B cell (primary cell): ENCODE measurements at regions of chr20 and their contacts with region 1.

Region 1: GRCh38 chr20:18287915-18288748 is at the start of gene ZNF133:
- DNase-seq: peak; percentile 98
- ATAC-seq: peak; percentile 94
- H3K4me3 ChIP-seq: peak within 1 kb of the TSS; percentile 88 to 99 (median 96)
- H3K4me3 Mint-ChIP-seq: peak within 1 kb of the TSS; percentile 90
- H3K27ac ChIP-seq: peak within 1 kb of the TSS; percentile 89 to 97
- H3K27ac Mint-ChIP-seq: peak within 1 kb of the TSS; percentile 96
- H3K4me1 ChIP-seq: peaks cover 12 to 15% of the 10 kb centered on the region in 2 donors
- H3K4me1 Mint-ChIP-seq: peaks cover 23% of the 10 kb centered on the region
- H3K27me3 ChIP-seq: peaks cover 0 to 19% (median 7%) of the 10 kb centered on the region in 4 experiments
- H3K27me3 Mint-ChIP-seq: peaks cover 28% of the 10 kb centered on the region
- CTCF ChIP-seq: no peak
- total RNA-seq, gene ZNF133: 13.6 and 14.9 TPM in 2 replicates

Region 2: DNA sequence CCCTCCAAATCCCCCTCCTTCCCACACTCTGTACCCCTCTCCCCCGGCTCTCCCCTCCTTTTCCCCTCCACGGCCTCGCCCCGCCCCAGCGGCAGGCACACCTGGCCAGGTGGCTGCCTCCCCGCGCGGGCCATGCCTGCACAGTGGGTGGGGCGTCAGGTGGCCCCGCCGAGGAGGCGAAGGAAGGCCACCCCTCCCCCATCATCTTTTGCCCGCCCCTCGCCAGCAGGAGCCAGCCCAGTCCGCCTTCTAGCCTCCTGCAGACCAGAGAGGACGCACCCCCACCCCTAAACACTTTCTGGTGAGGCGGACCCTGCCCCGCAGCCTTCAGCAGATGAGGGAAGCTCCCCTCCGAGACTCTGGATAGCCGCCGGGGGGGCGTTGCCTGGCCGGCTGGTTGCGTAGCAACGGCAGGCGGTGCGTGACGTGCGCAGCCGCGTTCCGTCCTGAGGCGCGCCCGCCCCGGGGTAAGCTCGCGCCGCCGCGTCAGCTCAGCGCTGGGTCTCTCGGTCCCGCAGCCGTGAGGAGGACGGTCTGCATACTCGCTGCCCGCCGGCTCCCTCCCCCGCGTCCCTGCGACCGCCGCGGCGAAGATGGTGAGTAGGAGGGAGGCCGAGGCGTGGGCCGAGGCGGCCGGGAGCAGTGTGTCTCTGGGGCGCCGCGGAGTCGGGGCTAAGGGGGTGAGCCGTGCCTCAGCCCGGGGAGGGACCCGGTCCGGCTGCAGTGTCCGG is 718.4 kb before region 1 on chr20 and contains the start of gene DSTN:
- CTCF ChIA-PET with region 1: no interaction called
- POLR2A ChIA-PET with region 1: no interaction called
- intact Hi-C with region 1: loop called (anchors 2 kb)
- DNase-seq: peak; percentile 93
- ATAC-seq: peak; percentile 91
- H3K4me3 ChIP-seq: peak within 1 kb of the TSS; percentile 77 to 97 (median 83)
- H3K4me3 Mint-ChIP-seq: peak within 1 kb of the TSS; percentile 94
- H3K27ac ChIP-seq: peak within 1 kb of the TSS in 1 of 2 donors; percentile 72
- H3K27ac Mint-ChIP-seq: peak within 1 kb of the TSS; percentile 89
- H3K4me1 ChIP-seq: peaks cover 11 to 14% of the 10 kb centered on the region in 2 donors
- H3K4me1 Mint-ChIP-seq: peaks cover 20% of the 10 kb centered on the region
- H3K27me3 ChIP-seq: peaks cover 0 to 12% (median 2%) of the 10 kb centered on the region in 4 experiments
- H3K27me3 Mint-ChIP-seq: peaks cover 8% of the 10 kb centered on the region
- CTCF ChIP-seq: no peak
- total RNA-seq, gene DSTN: 12.9 and 13.4 TPM in 2 replicates

Region 3: GRCh38 chr20:18137412-18138265 is 150.5 kb before region 1 on chr20 and contains the starts of genes KAT14 and PET117:
- CTCF ChIA-PET with region 1: no interaction called
- POLR2A ChIA-PET with region 1: interaction called, 5 read pairs
- intact Hi-C with region 1: loop called (anchors 1 kb)
- DNase-seq: peak; percentile 97
- ATAC-seq: peak; percentile 88
- H3K4me3 ChIP-seq: peak within 1 kb of the TSS; percentile 48 to 93 (median 85)
- H3K4me3 Mint-ChIP-seq: peak within 1 kb of the TSS; percentile 92
- H3K27ac ChIP-seq: peak within 1 kb of the TSS; percentile 65 to 77
- H3K27ac Mint-ChIP-seq: peak within 1 kb of the TSS; percentile 95
- H3K4me1 ChIP-seq: peaks cover 15 to 25% of the 10 kb centered on the region in 2 donors
- H3K4me1 Mint-ChIP-seq: peaks cover 27% of the 10 kb centered on the region
- H3K27me3 ChIP-seq: peaks cover 0 to 4% (median 0%) of the 10 kb centered on the region in 4 experiments
- H3K27me3 Mint-ChIP-seq: no peaks in the 10 kb centered on the region
- CTCF ChIP-seq: no peak
- total RNA-seq, gene KAT14: 15.1 and 15.5 TPM in 2 replicates
- total RNA-seq, gene PET117: 10.7 and 13.0 TPM in 2 replicates

Region 4: DNA sequence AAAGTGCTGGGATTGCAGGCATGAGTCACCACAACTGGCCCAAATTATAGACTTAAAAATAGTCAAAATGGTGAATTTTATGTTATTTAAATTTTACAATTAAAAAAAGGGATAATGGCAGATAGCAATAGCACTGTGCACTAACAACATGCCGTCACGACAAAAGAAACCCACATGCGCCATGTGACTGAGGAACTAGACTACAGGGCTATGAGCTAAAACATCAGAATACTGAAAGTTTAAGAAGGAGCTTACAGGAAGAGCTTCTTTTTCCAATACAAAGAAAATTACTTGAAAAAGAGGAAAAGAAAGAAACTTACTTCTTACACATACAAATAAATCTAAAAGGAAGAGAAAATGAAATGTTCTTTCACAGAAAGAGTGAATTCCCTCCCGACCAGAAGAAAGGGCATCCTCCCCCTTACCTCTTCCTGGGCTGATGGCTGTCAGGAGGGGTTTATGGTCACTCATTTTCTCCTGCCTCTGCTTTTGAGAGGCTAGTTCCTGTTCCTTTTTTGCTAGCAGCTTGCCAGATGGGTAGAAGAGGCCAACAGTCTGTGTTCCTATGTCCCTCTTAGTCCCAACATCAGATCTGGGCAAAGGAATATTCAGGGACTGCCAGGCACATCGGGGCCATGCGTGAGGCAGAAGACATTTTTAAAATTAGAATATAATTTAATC is 124.2 kb after region 1 on chr20:
- CTCF ChIA-PET with region 1: no interaction called
- POLR2A ChIA-PET with region 1: no interaction called
- intact Hi-C with region 1: loop called (anchors 2 kb)
- DNase-seq: peak; percentile 52
- ATAC-seq: peak; percentile 20
- H3K4me3 ChIP-seq: peak overlapping the region in 1 of 5 experiments; percentile 25
- H3K4me3 Mint-ChIP-seq: peak overlapping the region; percentile 63
- H3K27ac ChIP-seq: peak overlapping the region; percentile 65 to 70
- H3K27ac Mint-ChIP-seq: peak overlapping the region; percentile 70
- H3K4me1 ChIP-seq: peaks cover 7 to 15% of the 10 kb centered on the region in 2 donors
- H3K4me1 Mint-ChIP-seq: peaks cover 11% of the 10 kb centered on the region
- H3K27me3 ChIP-seq: no peaks in the 10 kb centered on the region
- H3K27me3 Mint-ChIP-seq: no peaks in the 10 kb centered on the region
- CTCF ChIP-seq: no peak

Region 5: DNA sequence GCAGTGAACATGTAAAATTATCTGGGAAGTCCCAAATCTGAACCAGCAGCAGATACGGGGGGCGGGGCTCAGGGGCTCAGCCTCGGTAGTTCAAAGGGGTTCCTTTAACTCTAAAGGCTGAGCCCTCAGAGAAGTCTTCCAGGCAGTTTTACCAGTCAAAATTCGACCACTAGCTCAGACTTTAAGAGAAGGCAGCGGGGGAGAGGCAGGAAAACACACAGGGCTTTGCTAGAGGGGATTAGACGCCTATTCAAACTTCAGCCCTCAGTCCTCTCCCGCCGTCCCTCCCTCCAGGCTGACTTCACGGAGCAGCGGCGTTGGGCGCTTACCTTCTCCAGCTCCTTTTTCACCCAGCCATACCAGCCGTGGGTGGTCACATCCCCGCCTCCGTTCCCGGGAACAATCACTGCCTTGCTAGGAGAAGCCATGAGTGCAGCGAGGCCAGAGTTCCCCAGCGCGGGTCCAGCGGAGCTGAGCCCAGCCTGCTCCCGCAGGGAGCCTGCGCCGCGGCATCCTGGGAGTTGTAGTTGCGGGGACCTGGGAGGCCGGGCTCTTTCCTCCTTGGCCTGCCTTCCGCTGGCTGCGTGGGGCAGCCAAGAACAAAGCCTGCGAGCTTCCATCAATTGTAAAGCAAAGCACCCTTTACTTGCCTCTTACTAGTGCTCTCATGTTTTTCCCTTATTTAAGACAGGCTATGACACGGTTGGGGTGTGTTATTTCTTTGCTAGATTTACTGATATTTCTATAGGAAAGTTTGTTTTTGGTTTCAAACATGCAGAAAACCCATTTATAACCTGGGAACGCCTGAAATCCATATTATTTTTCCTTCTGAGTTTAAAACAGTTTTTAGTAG is 208.8 kb after region 1 on chr20 and contains the start of gene RBBP9:
- CTCF ChIA-PET with region 1: interaction called, 4 read pairs
- POLR2A ChIA-PET with region 1: interaction called, 4 read pairs
- intact Hi-C with region 1: loop called (anchors 2 kb)
- DNase-seq: peak; percentile 81
- ATAC-seq: peak; percentile 100
- H3K4me3 ChIP-seq: peak within 1 kb of the TSS; percentile 74 to 96 (median 87)
- H3K4me3 Mint-ChIP-seq: peak within 1 kb of the TSS; percentile 98
- H3K27ac ChIP-seq: peak within 1 kb of the TSS; percentile 38 to 78
- H3K27ac Mint-ChIP-seq: peak within 1 kb of the TSS; percentile 89
- H3K4me1 ChIP-seq: peaks cover 7 to 11% of the 10 kb centered on the region in 2 donors
- H3K4me1 Mint-ChIP-seq: peaks cover 18% of the 10 kb centered on the region
- H3K27me3 ChIP-seq: no peaks in the 10 kb centered on the region
- H3K27me3 Mint-ChIP-seq: peaks cover 3% of the 10 kb centered on the region
- CTCF ChIP-seq: no peak
- total RNA-seq, gene RBBP9: 9.3 and 10.2 TPM in 2 replicates